ENCODE measurements at regions of chr6 and their contacts with region 1.

Region 1: DNA sequence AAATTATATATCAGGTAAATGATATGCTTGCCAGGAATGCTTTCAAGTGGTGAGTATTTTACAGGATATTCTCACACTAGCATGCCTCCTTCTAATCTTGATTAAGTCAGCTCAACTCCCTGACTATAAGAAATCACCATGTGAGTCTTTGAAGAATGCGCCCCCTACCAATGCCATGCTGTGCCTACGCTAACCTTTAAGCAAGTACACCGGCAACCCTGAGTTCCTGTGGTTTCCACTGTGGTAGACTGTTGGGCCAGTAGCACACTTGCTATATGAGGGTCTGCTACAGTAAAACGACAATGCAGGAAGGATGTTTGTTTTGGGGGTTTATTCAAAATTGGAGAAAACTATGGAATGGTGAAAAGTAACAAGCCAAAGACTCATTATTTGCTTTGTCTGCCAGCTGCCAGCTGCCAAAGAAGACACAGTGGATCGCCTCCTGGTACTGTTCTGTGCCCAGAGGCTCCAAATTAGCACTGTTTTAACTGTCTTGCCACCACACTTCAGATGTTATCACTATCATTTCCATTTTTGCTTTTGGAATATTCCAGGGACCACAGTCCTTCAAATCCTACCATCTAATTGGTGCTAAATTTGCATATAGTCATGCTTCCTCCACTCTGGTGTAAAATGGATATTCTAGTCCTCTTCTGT is 333.5 kb downstream of the RNGTT start:
- DNase-seq: no peak
- CTCF ChIP-seq: peak; percentile 21

Region 2: GRCh38 chr6:88619951-88620350 is 10.0 kb before region 1 on chr6:
- CTCF ChIA-PET with region 1: interaction called, 11 read pairs
- POLR2A ChIA-PET with region 1: no interaction called
- DNase-seq: no peak
- CTCF ChIP-seq: no peak

Region 3: DNA sequence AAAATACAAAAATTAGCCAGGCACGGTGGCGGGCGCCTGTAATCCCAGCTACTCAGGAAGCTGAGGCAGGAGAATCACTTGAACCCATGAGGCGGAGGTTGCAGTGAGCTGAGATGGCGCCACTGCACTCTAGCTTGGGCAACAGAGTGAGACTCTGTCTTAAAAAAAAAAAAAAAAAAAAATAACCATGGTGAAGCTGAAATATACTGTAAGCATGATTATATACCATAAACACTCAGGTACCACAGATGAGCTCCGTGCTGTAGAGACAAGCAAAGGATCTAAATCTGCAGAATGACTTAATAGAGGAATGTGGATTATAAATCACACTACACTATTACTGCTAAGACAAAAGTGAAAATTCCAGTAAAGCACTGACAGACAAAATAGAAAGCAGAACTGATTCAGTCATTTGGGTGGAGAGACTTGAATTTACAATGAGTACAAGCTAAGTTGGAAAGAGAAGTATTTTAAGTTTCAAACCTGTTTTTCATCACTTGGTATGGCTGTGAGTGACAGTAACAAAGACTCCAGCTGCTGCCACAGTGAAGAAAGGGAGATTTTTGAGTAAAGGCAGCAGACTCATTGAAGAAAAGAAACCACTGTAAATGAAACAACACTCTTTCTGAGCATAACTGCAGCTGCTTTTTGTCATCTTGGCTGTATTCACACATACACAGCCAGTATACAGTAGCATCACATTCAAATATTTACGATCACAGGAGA is 11.4 kb after region 1 on chr6:
- CTCF ChIA-PET with region 1: interaction called, 24 read pairs
- POLR2A ChIA-PET with region 1: no interaction called
- DNase-seq: peak; percentile 48
- CTCF ChIP-seq: no peak